ENCODE measurements at regions of chr6 and their contacts with region 1.

Region 1: GRCh38 chr6:170516783-170517616 is 36.1 kb downstream of the PSMB1 start:
- DNase-seq: peak; percentile 31
- H3K4me3 ChIP-seq: no peak overlapping the region
- CTCF ChIP-seq: peak; percentile 73

Region 2: DNA sequence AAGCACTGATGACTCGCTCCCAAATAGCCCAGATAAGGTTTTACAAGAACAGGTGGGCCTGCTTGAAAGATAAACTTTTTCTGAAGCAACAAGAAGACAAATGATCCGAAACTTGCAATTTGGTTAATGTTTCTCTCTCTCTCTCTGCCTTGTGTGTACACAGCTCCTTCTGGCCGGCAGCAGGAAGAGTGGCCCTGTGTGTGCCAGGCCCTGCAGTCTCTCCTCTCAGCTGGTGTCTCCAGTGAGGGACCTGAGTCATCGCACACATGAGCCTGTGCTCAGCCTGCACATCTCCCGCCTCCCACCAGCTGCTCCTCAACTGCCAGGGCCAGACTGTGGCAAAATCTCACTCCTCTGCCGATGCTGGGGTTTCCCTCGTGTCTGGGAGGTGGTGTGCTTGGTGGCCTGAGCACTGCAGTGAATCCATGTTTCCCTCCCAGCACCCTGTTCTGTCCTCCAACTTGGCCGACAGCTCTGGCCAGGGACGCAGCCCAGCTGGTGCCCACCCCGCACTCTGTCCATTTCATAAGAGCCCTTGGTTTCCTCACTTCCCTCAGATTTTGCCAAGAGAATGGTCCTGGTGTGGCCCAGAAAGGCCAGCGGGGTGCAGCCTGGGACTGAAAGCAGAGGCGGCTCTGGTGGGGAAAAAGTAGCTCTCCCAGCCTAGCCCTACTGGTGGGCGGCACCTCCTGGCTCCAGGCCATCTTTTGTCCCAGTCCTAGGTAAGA is 716.2 kb before region 1 on chr6:
- CTCF ChIA-PET with region 1: interaction called, 11 read pairs
- POLR2A ChIA-PET with region 1: no interaction called
- DNase-seq: no peak
- H3K4me3 ChIP-seq: no peak overlapping the region
- CTCF ChIP-seq: no peak

Region 3: DNA sequence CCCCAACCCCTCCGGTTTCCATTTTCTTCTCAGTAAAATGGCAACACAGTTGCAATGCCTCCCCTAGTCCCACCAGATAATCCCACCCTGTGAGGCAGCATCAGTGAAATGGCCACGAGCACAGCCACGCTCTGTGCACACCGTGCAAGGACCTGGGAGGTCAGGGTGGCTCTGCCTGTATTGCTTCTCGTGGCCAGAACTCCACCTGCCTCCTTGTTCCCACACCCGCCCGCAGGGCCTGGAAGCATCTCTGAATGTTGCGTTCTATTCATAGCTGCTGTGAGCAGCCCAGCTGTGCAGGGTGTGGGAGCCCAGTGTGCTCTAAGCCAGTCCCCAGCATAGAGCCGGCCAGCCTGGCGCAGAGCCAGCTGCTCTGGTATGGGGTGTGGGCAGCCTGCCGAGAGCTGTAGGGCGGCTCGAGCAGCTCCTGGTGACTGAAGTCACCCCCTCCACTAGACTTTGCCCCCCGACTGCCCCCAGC is 387.3 kb before region 1 on chr6:
- CTCF ChIA-PET with region 1: no interaction called
- POLR2A ChIA-PET with region 1: no interaction called
- DNase-seq: no peak
- H3K4me3 ChIP-seq: no peak overlapping the region
- CTCF ChIP-seq: no peak